ENCODE measurements at regions of chr1 and their contacts with region 1.

Region 1: DNA sequence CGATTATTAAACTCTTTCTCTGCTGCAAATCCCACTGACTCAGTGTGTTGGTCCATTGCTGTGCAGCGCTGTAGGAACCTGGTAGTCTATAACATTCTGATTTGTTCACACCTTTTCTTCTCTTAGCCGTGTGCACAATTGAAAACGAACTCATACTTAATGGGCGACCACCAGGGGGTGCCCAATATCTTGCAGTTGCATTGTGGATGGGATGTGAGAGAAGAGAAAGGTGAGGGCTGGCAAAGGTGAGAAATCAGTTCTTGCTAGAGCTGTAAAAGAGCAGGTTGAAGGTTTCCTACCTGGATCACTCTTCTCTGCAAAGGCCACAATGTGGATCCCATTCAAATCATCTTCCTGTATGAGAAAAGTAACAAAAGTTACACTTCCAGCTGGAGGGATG is 51.0 kb downstream of the CASQ2 start:
- DNase-seq: peak; percentile 69
- H3K4me3 ChIP-seq: no peak overlapping the region
- H3K27ac ChIP-seq: no peak overlapping the region
- H3K4me1 ChIP-seq: no peaks in the 10 kb centered on the region
- H3K27me3 ChIP-seq: no peaks in the 10 kb centered on the region
- CTCF ChIP-seq: peak in 2 of 3 experiments; percentile 52 to 56
- POLR2A ChIP-seq: no peak

Region 2: GRCh38 chr1:115771847-115772457 is 54.4 kb after region 1 on chr1:
- intact Hi-C with region 1: loop called (anchors 5 kb)
- DNase-seq: peak; percentile 71
- H3K4me3 ChIP-seq: peak overlapping the region in 1 of 2 donors; percentile 14
- H3K27ac ChIP-seq: no peak overlapping the region
- H3K4me1 ChIP-seq: no peaks in the 10 kb centered on the region
- H3K27me3 ChIP-seq: no peaks in the 10 kb centered on the region
- CTCF ChIP-seq: peak; percentile 52 to 71 (median 60)
- POLR2A ChIP-seq: no peak

Measured in testis (tissue), 5 donors.